ENCODE measurements at regions of chr10 and their contacts with region 1.

Region 1: DNA sequence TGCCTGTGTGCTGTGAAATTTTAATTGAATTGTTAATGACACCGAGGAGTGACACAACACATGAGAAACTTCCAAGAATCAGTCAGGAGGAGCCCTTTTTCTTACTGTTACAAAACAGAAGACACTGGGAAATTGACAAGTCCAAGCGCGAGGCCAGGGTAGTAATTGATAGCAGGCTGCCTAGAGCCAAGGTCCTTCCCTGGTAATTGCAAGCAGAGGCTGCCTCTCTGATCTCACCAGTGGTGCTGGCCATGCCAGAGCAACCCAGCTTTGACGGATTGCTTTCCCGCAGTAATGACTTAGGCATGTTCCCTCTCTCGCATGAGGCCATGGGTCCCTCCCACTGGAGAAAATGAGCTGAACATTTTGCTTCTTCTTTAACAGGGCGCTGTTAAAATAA is 111.5 kb downstream of the LRMDA start:
- DNase-seq: no peak
- H3K4me3 ChIP-seq: no peak overlapping the region
- H3K27ac ChIP-seq: no peak overlapping the region
- H3K4me1 ChIP-seq: peaks cover 9% of the 10 kb centered on the region
- H3K27me3 ChIP-seq: no peaks in the 10 kb centered on the region
- CTCF ChIP-seq: no peak
- POLR2A ChIP-seq: no peak

Region 2: GRCh38 chr10:75408911-75409885 is 133.7 kb before region 1 on chr10:
- intact Hi-C with region 1: loop called (anchors 5 kb)
- DNase-seq: no peak
- H3K4me3 ChIP-seq: peak overlapping the region; percentile 73 to 82
- H3K27ac ChIP-seq: peak overlapping the region; percentile 87
- H3K4me1 ChIP-seq: peaks cover 46% of the 10 kb centered on the region
- H3K27me3 ChIP-seq: no peaks in the 10 kb centered on the region
- CTCF ChIP-seq: no peak
- POLR2A ChIP-seq: peak in 1 of 2 donors; percentile 20